H1 (cell line): ENCODE measurements at regions of chr2 and their contacts with region 1.

Region 1: GRCh38 chr2:85826990-85827878 is 61.6 kb downstream of the ST3GAL5 start:
- DNase-seq: peak in 1 of 2 experiments; percentile 92
- H3K4me3 ChIP-seq: 0 out of 8 replicates have a peak overlapping the region, but pooled peaks of 1 of the 4 experiments have one; percentile 0
- H3K27ac ChIP-seq: no peak overlapping the region
- H3K4me1 ChIP-seq: peaks cover 0 to 3% (median 0%) of the 10 kb centered on the region in 4 experiments; a peak in 3 of 7 replicates
- H3K27me3 ChIP-seq: no peaks in the 10 kb centered on the region
- CTCF ChIP-seq: peak; percentile 84 to 89 (median 87)
- EP300 ChIP-seq: no peak
- POLR2A ChIP-seq: no peak
- RAD21 ChIP-seq: peak; percentile 88 to 91

Region 2: GRCh38 chr2:85757860-85758259 is 69.4 kb before region 1 on chr2:
- CTCF ChIA-PET with region 1: no interaction called
- POLR2A ChIA-PET with region 1: no interaction called
- DNase-seq: no peak
- H3K4me3 ChIP-seq: no peak overlapping the region
- H3K27ac ChIP-seq: no peak overlapping the region
- H3K4me1 ChIP-seq: peaks cover 0 to 8% (median 7%) of the 10 kb centered on the region in 4 experiments; a peak in 5 of 7 replicates
- H3K27me3 ChIP-seq: peaks cover 28 to 51% (median 40%) of the 10 kb centered on the region in 4 experiments
- CTCF ChIP-seq: no peak
- EP300 ChIP-seq: no peak
- POLR2A ChIP-seq: no peak
- RAD21 ChIP-seq: no peak

Region 3: DNA sequence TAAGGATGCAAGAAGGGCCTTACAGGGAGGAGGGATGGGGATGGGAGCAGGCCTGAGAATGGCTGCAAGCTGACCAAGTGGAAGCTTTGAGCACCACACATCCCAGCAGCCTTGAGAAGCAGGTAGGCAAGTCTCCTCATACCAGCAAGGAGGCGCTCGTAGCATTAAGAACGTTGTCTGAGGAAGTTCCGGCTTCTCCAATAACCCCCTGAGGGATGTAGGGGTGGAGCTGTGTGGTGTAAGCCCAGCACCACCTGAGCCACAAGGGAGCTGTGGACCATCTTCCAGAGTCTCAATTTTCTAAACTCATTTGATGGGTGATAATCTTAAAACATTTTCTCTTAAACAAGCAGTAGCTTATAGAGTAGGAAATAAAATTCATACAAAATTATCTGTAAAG is 10.9 kb after region 1 on chr2:
- CTCF ChIA-PET with region 1: interaction called, 35 read pairs
- POLR2A ChIA-PET with region 1: interaction called, 3 read pairs
- DNase-seq: no peak
- H3K4me3 ChIP-seq: no peak overlapping the region
- H3K27ac ChIP-seq: no peak overlapping the region
- H3K4me1 ChIP-seq: no peaks in the 10 kb centered on the region
- H3K27me3 ChIP-seq: no peaks in the 10 kb centered on the region
- CTCF ChIP-seq: peak; percentile 34 to 63 (median 52)
- EP300 ChIP-seq: no peak
- POLR2A ChIP-seq: no peak
- RAD21 ChIP-seq: peak; percentile 72 to 76

Region 4: DNA sequence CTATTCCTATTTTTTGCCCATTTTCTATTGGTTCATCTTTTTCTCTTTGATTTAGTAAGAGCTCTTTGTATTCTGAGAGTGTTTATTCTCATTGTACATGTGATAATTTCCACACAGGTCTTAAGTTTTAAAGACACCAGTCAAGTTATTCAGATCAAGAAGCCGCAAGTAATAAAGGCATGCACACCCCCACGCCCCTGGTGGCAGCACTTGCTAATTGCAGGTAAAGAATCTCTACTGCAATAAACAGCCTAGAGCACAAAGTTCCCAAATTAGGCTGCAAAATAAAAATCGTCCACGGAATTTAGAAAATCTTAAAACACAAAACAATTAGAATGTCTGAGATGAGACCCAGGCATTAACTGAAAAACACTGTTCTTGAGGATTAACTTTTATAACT is 16.3 kb after region 1 on chr2:
- CTCF ChIA-PET with region 1: interaction called, 35 read pairs
- POLR2A ChIA-PET with region 1: interaction called, 3 read pairs
- DNase-seq: peak in 1 of 2 experiments; percentile 80
- H3K4me3 ChIP-seq: no peak overlapping the region
- H3K27ac ChIP-seq: no peak overlapping the region
- H3K4me1 ChIP-seq: no peaks in the 10 kb centered on the region
- H3K27me3 ChIP-seq: no peaks in the 10 kb centered on the region
- CTCF ChIP-seq: peak; percentile 47 to 70 (median 58)
- EP300 ChIP-seq: no peak
- POLR2A ChIP-seq: no peak
- RAD21 ChIP-seq: peak; percentile 16 to 33; a peak in 2 of 4 replicates

Region 5: DNA sequence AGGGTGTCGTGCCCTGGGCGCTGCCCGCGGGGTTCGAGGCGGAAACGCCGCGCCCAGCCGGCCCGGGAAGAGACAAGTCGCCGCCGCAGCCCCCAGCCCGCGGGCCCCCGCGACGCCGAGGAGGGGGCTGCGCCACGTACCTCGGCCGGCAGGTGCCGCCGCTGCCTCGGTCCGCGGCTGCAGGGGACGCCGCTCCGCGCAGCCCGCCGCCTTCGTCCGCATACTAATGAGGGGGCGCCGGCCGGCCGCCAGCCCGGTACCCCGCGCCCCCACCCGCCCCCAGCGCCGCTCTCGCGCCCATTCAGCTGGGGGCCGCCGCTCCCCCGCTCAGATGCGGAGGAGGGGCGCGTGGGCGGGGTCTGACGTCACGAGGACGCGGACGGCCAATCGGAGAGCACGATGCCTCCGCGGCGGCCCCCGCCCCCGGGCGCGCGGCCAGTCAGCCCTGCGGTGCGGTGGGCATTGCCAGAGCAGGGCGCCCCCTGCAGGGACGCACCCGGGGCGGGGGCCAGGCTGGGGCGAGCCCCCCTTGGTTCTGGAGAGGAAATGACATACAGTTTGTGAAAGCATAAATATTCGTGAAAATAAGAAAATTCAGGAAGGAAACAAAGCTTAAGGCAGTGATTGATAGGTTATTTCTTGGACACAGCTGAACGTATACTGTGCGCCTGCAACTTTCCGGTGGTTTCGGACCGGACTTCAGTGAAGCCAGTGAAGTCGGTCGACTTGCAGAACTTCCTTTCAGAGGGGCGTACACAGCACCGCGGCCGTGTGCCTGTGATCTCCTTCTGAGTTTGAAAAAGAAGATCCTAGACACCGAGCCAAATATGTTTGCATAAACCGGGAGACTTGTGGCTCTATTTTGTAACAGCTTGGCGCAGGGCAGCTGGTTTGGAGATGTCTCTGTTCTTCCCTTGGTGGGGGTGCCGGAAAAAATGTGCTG is 61.7 kb after region 1 on chr2 and contains the start of gene ST3GAL5:
- CTCF ChIA-PET with region 1: interaction called, 14 read pairs
- POLR2A ChIA-PET with region 1: interaction called, 3 read pairs
- DNase-seq: peak; percentile 49 to 94
- H3K4me3 ChIP-seq: peak within 1 kb of the TSS; percentile 53 to 88 (median 76)
- H3K27ac ChIP-seq: no peak within 1 kb of the TSS
- H3K4me1 ChIP-seq: peaks cover 5 to 8% (median 6%) of the 10 kb centered on the region in 4 experiments
- H3K27me3 ChIP-seq: peaks cover 0 to 19% (median 13%) of the 10 kb centered on the region in 4 experiments; a peak in 6 of 7 replicates
- CTCF ChIP-seq: peak; percentile 55 to 69 (median 69)
- EP300 ChIP-seq: no peak
- POLR2A ChIP-seq: no peak
- RAD21 ChIP-seq: peak; percentile 25 to 54; a peak in 3 of 4 replicates
- total RNA-seq, gene ST3GAL5: 3.0 and 4.5 TPM in 2 replicates

Region 6: DNA sequence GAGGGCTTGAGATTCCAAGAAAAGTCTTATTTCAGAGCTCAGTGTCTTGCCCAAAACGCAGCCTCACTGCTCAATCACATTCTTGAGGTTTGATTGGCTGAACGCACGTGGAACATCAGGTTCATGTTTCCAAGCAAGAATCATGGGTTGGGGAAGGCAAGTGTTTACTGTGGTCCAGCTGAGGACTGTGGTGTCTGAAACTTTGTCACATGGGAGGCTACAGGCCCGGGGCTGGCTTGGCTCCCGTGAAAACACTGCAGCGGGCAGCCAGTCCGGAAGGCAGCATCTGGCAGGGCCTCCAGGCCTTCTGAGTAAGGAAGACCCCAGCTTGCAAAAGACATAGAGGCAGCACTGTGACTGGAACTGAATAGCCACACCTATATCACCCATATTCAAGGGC is 193.8 kb after region 1 on chr2:
- CTCF ChIA-PET with region 1: interaction called, 18 read pairs
- POLR2A ChIA-PET with region 1: no interaction called
- DNase-seq: no peak
- H3K4me3 ChIP-seq: no peak overlapping the region
- H3K27ac ChIP-seq: no peak overlapping the region
- H3K4me1 ChIP-seq: no peaks in the 10 kb centered on the region
- H3K27me3 ChIP-seq: no peaks in the 10 kb centered on the region; a peak in 1 of 7 replicates
- CTCF ChIP-seq: no peak
- EP300 ChIP-seq: no peak
- POLR2A ChIP-seq: no peak; a peak in 1 of 3 replicates
- RAD21 ChIP-seq: no peak

Region 7: DNA sequence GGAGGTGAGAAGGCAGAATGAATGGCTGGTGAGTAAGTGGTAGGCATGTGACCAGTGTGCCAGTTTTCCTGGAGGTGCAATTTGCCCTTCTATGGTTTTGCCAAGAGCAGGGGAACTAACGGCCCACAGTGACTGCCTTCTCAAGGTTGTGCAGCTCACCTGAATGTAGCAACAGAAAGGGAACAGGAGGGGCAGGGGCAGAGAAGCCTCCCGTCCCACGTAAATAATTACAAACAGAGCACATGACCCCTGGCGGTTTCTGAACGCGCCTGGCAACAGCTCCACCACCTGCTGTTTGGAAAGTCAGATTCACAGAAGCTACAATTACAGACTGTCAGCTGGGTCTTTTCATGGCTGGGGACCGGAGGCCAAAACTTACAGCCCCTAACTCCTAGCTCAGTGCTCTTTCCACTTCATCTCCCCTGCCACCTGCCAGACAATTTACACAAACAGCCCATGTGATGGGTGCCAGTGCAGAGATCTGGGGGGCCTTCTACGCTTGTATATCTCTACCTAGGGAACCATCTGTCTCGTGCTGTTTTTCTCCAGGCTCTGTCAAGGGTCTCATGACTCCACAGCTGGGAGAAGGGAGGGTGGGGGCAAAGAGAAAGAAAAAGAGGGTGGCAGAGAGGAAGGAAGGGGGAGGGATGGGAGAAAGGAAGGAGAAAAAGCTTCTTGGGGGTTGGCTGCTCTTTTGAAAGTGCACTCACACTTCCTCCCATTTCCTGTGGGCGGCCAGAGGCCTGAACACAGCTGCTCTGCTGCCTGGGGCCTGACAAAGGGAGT is 208.8 kb after region 1 on chr2:
- CTCF ChIA-PET with region 1: interaction called, 10 read pairs
- POLR2A ChIA-PET with region 1: no interaction called
- DNase-seq: no peak
- H3K4me3 ChIP-seq: no peak overlapping the region
- H3K27ac ChIP-seq: no peak overlapping the region
- H3K4me1 ChIP-seq: no peaks in the 10 kb centered on the region; a peak in 1 of 7 replicates
- H3K27me3 ChIP-seq: no peaks in the 10 kb centered on the region
- CTCF ChIP-seq: no peak
- EP300 ChIP-seq: no peak
- POLR2A ChIP-seq: no peak
- RAD21 ChIP-seq: peak in 1 of 2 experiments; percentile 4; a peak in 1 of 4 replicates

Region 8: DNA sequence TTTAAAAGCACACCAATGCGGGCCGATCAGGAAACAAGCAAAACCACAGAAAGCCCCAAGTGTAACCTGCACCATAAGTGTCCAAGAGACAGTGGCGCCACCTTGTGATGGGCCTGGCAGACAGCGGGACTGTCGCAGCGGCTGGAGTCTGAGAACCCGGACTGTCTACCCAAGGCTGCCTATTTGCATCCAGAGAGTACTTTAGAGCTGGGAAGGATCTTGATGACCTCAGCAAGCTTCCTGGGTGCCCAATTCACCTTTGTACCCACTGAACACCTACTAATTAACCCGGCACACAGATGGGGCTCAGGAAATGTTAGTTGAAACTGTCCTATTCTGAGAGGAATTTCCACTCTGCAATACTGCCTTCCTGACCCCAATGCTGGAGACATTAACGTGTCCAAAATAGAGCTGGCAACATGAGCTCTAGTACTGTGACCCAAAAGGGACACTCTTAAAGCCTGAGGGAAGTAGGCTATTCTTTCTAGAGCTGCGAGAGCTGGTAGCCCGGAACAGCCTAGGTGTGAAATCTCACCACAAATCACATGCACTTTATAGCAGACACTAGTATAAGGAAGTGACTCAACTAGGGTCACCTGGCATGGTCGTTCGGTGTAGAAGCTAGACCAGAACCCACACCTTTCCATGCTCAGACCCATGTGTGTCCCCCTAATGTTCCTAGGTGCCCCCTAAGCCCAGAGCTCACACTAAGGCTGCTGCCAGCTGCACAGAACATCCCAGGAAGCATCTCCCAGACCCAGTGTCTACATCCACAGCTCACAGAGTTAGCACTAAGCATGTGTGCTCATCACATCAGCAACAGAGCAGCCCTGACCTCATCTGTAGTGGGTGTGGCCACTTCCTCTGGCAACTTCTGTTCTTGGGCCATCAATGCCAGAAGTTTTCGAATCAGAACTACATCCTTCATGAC is 253.0 kb after region 1 on chr2:
- CTCF ChIA-PET with region 1: interaction called, 61 read pairs
- POLR2A ChIA-PET with region 1: no interaction called
- DNase-seq: peak; percentile 21 to 88
- H3K4me3 ChIP-seq: no peak overlapping the region
- H3K27ac ChIP-seq: no peak overlapping the region
- H3K4me1 ChIP-seq: no peaks in the 10 kb centered on the region
- H3K27me3 ChIP-seq: no peaks in the 10 kb centered on the region
- CTCF ChIP-seq: peak; percentile 76 to 92 (median 84)
- EP300 ChIP-seq: no peak
- POLR2A ChIP-seq: no peak
- RAD21 ChIP-seq: peak; percentile 62 to 65